Heart left ventricle (tissue), 16 donors: ENCODE measurements at regions of chr5 and their contacts with region 1.

Region 1: GRCh38 chr5:141040771-141041426 is 10.3 kb upstream of the PCDHB1 start:
- DNase-seq: peak; percentile 86 to 95 (median 91)
- ATAC-seq: peak; percentile 93 to 99 (median 98)
- H3K4me3 ChIP-seq: peak overlapping the region in 11 of 12 donors; percentile 12 to 60 (median 41)
- H3K27ac ChIP-seq: peak overlapping the region in 4 of 12 donors; percentile 4 to 57 (median 25)
- H3K4me1 ChIP-seq: peaks cover 0 to 14% (median 0%) of the 10 kb centered on the region in 12 donors
- H3K27me3 ChIP-seq: peaks cover 0 to 18% (median 0%) of the 10 kb centered on the region in 9 donors
- CTCF ChIP-seq: peak; percentile 47 to 83 (median 67)
- POLR2A ChIP-seq: no peak

Region 2: DNA sequence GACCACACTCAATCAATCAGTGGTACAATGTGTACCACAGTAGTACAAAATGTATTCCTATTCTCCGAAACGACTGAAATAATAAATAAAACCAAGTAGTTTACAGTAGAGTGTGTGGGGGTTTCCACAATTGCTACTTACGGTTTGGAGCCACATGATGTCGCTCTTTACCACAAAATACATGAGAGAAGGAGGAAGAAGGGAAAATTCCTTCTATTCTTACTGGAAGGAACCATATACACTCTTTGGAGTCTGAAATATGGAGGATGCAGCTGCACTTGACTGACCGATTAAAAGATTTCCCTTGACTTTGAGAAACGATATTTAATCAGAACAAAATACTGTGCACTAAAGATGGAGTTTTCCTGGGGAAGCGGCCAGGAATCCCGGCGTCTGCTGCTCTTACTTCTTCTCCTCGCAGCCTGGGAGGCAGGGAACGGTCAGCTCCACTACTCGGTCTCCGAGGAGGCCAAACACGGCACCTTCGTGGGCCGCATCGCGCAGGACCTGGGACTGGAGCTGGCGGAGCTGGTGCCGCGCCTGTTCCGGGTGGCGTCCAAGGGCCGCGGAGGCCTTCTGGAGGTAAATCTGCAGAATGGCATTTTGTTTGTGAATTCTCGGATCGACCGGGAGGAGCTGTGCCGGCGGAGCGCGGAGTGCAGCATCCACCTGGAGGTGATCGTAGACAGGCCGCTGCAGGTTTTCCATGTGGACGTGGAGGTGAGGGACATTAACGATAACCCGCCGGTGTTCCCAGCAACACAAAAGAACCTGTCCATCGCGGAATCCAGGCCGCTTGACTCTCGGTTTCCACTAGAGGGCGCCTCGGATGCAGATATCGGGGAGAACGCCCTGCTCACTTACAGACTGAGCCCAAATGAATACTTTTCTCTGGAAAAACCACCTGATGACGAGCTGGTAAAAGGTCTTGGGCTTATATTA is 233.8 kb before region 1 on chr5 and contains the start of gene PCDHA4:
- intact Hi-C with region 1: loop called in 3 of 10 experiments (anchors 5 to 10 kb)
- DNase-seq: no peak
- ATAC-seq: peak in 2 of 4 donors; percentile 52
- H3K4me3 ChIP-seq: peak within 1 kb of the TSS in 10 of 12 donors; percentile 23 to 56 (median 37)
- H3K27ac ChIP-seq: no peak within 1 kb of the TSS
- H3K4me1 ChIP-seq: no peaks in the 10 kb centered on the region
- H3K27me3 ChIP-seq: peaks cover 0 to 37% (median 6%) of the 10 kb centered on the region in 9 donors
- CTCF ChIP-seq: peak in 9 of 12 donors; percentile 14 to 50 (median 33)
- POLR2A ChIP-seq: no peak
- total RNA-seq, gene PCDHA4: 0.02 to 0.21 (median 0.13) TPM in 6 of 9 donors, not detected in the others

Region 3: GRCh38 chr5:140855772-140856674 is 184.9 kb before region 1 on chr5 and contains the start of gene PCDHA10:
- intact Hi-C with region 1: loop called in 2 of 10 experiments (anchors 10 kb)
- DNase-seq: no peak
- ATAC-seq: no peak
- H3K4me3 ChIP-seq: peak within 1 kb of the TSS in 7 of 12 donors; percentile 15 to 49 (median 29)
- H3K27ac ChIP-seq: no peak within 1 kb of the TSS
- H3K4me1 ChIP-seq: no peaks in the 10 kb centered on the region
- H3K27me3 ChIP-seq: peaks cover 0 to 72% (median 11%) of the 10 kb centered on the region in 9 donors
- CTCF ChIP-seq: peak in 6 of 12 donors; percentile 8 to 41 (median 26)
- POLR2A ChIP-seq: no peak
- total RNA-seq, gene PCDHA10: 0.04 to 0.41 (median 0.19) TPM in 7 of 9 donors, not detected in the others

Region 4: DNA sequence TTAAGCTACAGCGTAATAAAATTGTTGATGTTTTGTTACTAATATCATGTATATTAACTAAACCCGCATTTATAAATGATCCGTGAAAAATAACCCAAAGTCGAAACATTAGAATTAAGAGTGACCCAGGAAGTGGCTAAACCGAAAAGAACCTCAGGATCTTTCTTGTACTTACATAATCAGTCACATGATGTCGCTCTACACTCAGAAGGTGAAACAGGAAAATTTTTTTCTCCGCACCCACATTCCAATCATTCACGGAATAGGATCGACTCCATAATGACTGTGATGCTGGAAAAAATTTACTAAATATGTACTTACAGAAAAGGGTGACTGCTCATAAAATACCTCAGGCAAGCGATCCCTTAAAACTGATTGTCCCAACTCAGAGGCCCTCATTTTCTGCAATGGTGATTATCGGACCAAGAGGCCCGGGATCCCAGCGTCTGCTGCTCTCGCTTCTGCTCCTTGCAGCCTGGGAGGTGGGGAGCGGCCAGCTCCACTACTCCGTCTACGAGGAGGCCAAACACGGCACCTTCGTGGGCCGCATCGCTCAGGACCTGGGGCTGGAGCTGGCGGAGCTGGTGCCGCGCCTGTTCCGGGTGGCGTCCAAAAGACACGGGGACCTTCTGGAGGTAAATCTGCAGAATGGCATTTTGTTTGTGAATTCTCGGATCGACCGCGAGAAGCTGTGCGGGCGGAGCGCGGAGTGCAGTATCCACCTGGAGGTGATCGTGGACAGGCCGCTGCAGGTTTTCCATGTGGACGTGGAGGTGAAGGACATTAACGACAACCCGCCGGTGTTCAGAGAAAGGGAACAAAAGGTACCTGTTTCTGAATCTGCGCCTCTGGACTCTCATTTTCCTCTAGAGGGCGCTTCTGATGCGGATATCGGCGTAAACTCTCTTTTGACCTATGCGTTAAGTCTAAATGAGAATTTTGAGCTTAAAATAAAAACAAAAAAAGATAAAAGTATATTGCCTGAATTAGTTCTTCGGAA is 165.5 kb before region 1 on chr5 and contains the start of gene PCDHA12:
- intact Hi-C with region 1: loop called in 2 of 10 experiments (anchors 10 kb)
- DNase-seq: no peak
- ATAC-seq: no peak
- H3K4me3 ChIP-seq: peak within 1 kb of the TSS in 1 of 12 donors; percentile 5
- H3K27ac ChIP-seq: no peak within 1 kb of the TSS
- H3K4me1 ChIP-seq: no peaks in the 10 kb centered on the region
- H3K27me3 ChIP-seq: peaks cover 0 to 90% (median 38%) of the 10 kb centered on the region in 9 donors
- CTCF ChIP-seq: no peak
- POLR2A ChIP-seq: no peak
- total RNA-seq, gene PCDHA12: 0.08 to 0.97 (median 0.09) TPM in 4 of 9 donors, not detected in the others

Region 5: GRCh38 chr5:140926443-140927227 is 114.3 kb before region 1 on chr5:
- intact Hi-C with region 1: loop called in 4 of 10 experiments (anchors 2 to 5 kb)
- DNase-seq: peak; percentile 56 to 84 (median 66)
- ATAC-seq: peak in 3 of 4 donors; percentile 87 to 94 (median 91)
- H3K4me3 ChIP-seq: peak overlapping the region; percentile 11 to 59 (median 47)
- H3K27ac ChIP-seq: no peak overlapping the region
- H3K4me1 ChIP-seq: peaks cover 0 to 19% (median 4%) of the 10 kb centered on the region in 12 donors
- H3K27me3 ChIP-seq: peaks cover 9 to 89% (median 51%) of the 10 kb centered on the region in 9 donors
- CTCF ChIP-seq: peak; percentile 50 to 80 (median 62)
- POLR2A ChIP-seq: no peak

Region 6: GRCh38 chr5:141121563-141121962 is 80.7 kb after region 1 on chr5 and contains the start of gene PCDHB4:
- intact Hi-C with region 1: no loop called
- DNase-seq: peak in 2 of 5 donors; percentile 31 to 69
- ATAC-seq: no peak
- H3K4me3 ChIP-seq: peak within 1 kb of the TSS in 10 of 12 donors; percentile 11 to 52 (median 40)
- H3K27ac ChIP-seq: peak within 1 kb of the TSS in 2 of 12 donors; percentile 26
- H3K4me1 ChIP-seq: no peaks in the 10 kb centered on the region
- H3K27me3 ChIP-seq: peaks cover 0 to 13% (median 0%) of the 10 kb centered on the region in 9 donors
- CTCF ChIP-seq: peak in 9 of 12 donors; percentile 6 to 52 (median 40)
- POLR2A ChIP-seq: no peak
- total RNA-seq, gene PCDHB4: 0.91 to 2.8 (median 1.6) TPM

Region 7: DNA sequence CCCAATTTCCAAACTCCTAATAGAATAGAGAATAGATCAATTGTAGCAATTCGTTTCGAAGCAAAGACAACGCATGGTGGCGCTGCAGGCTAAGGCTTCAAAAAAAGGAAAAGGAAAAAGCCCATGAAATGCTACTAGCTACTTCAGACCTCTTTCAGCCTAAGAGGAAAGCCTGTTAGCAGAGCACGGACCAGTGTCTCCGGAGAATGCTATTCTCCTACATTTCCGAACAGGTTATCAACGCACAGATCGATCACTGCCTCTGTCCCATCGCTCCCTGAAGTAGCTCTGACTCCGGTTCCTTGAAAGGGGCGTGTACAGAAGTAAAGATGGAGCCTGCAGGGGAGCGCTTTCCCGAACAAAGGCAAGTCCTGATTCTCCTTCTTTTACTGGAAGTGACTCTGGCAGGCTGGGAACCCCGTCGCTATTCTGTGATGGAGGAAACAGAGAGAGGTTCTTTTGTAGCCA is 204.4 kb after region 1 on chr5 and contains the start of gene PCDHB15:
- intact Hi-C with region 1: no loop called
- DNase-seq: peak in 2 of 5 donors; percentile 19 to 30
- ATAC-seq: peak; percentile 26 to 60 (median 32)
- H3K4me3 ChIP-seq: peak within 1 kb of the TSS in 11 of 12 donors; percentile 23 to 60 (median 50)
- H3K27ac ChIP-seq: peak within 1 kb of the TSS in 2 of 12 donors; percentile 18 to 62
- H3K4me1 ChIP-seq: peaks cover 0 to 2% (median 0%) of the 10 kb centered on the region in 12 donors
- H3K27me3 ChIP-seq: peaks cover 0 to 19% (median 4%) of the 10 kb centered on the region in 9 donors
- CTCF ChIP-seq: peak in 11 of 12 donors; percentile 18 to 58 (median 45)
- POLR2A ChIP-seq: no peak
- total RNA-seq, gene PCDHB15: 3.7 to 7.5 (median 4.5) TPM